ENCODE measurements at regions of chrX and their contacts with region 1.

Region 1: GRCh38 chrX:2647627-2648026 is 43.5 kb upstream of the CD99 start:
- DNase-seq: no peak
- H3K4me3 Mint-ChIP-seq: peak overlapping the region; percentile 18
- H3K27ac Mint-ChIP-seq: peak overlapping the region; percentile 83
- H3K4me1 Mint-ChIP-seq: peaks cover 25% of the 10 kb centered on the region
- H3K27me3 Mint-ChIP-seq: no peaks in the 10 kb centered on the region

Region 2: DNA sequence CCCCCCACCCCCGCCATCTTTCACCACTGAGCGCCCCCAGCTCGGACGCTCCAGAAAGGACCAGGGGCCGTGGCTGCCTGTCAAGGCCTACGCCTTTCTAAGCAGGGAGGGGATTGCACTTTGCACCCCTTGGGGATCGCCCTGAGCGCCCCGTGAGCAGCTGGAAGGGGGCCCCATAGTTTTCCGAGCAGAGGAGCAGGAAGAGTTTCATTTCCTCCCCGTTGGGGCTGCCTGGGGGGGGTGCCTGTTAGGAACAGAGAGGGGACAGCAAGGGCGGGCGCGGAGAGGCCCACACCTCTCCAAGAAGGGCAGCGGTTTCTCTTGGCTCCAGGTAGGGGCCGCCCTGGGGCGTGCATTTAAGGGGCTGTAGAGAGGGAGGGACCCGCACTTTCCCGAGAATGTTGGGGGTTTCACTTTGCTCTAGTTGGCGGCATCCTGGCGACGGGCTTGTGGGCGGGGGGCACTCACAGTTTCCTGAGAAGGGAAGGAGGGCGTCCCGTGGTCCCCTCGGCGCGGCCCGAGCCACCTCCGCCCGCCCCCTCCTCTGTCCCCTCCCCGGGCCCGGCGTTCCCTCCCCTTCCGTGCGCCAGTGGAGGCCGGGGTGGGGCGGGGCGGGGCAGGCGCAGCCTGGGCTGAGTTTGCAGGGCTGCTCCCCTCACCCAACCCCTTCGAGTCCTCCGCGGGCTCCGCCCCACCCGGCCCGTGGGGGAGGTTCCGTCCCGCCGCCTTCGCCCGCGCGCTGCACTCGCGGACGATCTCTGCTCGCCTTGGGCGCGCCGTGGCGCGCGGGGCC is 38.8 kb before region 1 on chrX:
- intact Hi-C with region 1: no loop called
- DNase-seq: peak; percentile 97
- H3K4me3 Mint-ChIP-seq: peak overlapping the region; percentile 95
- H3K27ac Mint-ChIP-seq: peak overlapping the region; percentile 93
- H3K4me1 Mint-ChIP-seq: peaks cover 46% of the 10 kb centered on the region
- H3K27me3 Mint-ChIP-seq: no peaks in the 10 kb centered on the region

Region 3: GRCh38 chrX:2811271-2811670 is 163.6 kb after region 1 on chrX:
- intact Hi-C with region 1: loop called (anchors 1 kb)
- DNase-seq: no peak
- H3K4me3 Mint-ChIP-seq: no peak overlapping the region
- H3K27ac Mint-ChIP-seq: no peak overlapping the region
- H3K4me1 Mint-ChIP-seq: peaks cover 3% of the 10 kb centered on the region
- H3K27me3 Mint-ChIP-seq: peaks cover 14% of the 10 kb centered on the region

Region 4: GRCh38 chrX:2875798-2876399 is 228.3 kb after region 1 on chrX:
- intact Hi-C with region 1: no loop called
- DNase-seq: no peak
- H3K4me3 Mint-ChIP-seq: no peak overlapping the region
- H3K27ac Mint-ChIP-seq: no peak overlapping the region
- H3K4me1 Mint-ChIP-seq: no peaks in the 10 kb centered on the region
- H3K27me3 Mint-ChIP-seq: peaks cover 5% of the 10 kb centered on the region

Measured in activated CD4-positive, alpha-beta T cell treated with anti-CD3 and anti-CD28 coated beads, Interleukin-2, amount 10 ng/mL, durations not matched to agents 24 days and 14 days (primary cell).